ENCODE measurements at regions of chr1 and their contacts with region 1.

Region 1: GRCh38 chr1:200628223-200628881 is 7.8 kb upstream of the KIF14 start:
- DNase-seq: no peak
- H3K4me3 ChIP-seq: no peak overlapping the region
- H3K27ac ChIP-seq: no peak overlapping the region
- H3K4me1 ChIP-seq: peaks cover 15% of the 10 kb centered on the region
- H3K27me3 ChIP-seq: no peaks in the 10 kb centered on the region
- CTCF ChIP-seq: no peak

Region 2: DNA sequence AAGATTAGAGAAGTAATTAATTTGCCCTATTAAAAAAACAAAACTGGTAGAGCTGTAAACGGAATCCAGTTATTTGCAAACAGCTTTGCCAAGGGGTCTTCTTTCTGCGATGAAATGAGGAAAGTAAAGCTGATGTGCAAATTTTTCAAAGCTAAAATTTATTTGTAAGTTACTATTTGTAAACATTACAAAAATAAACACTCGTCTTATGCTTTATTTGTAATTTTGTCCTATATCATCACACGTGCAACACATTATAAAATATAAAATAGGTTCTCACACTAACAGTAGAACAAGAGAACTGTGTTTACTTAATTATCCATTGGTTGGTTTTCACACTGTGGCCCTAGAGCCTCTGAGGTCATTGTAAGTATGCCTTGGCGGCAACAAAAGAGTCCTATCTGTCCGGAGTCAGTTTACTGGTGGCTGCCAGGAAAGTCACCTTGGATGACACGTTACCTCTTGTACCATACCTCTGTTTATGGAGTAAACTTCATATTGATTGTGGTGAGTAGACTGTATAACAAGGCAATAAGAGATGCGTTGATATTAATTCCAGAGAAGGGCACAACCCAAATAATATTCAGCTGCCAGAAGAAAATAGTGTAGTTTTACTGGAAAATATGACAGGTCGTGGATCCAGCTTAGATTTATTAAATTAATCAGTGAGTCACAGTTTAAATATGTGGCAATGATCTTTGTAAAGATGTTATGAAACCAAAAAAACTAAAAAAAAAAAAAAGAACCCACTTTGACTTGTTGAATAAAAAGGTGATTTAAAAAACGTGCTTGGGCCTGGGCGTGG is 12.5 kb after region 1 on chr1:
- CTCF ChIA-PET with region 1: no interaction called
- dilution Hi-C with region 1: no loop called
- in situ Hi-C with region 1: no loop called
- intact Hi-C with region 1: no loop called
- DNase-seq: no peak
- H3K4me3 ChIP-seq: no peak overlapping the region
- H3K27ac ChIP-seq: peak overlapping the region; percentile 95
- H3K4me1 ChIP-seq: peaks cover 15% of the 10 kb centered on the region
- H3K27me3 ChIP-seq: no peaks in the 10 kb centered on the region
- CTCF ChIP-seq: no peak

Region 3: DNA sequence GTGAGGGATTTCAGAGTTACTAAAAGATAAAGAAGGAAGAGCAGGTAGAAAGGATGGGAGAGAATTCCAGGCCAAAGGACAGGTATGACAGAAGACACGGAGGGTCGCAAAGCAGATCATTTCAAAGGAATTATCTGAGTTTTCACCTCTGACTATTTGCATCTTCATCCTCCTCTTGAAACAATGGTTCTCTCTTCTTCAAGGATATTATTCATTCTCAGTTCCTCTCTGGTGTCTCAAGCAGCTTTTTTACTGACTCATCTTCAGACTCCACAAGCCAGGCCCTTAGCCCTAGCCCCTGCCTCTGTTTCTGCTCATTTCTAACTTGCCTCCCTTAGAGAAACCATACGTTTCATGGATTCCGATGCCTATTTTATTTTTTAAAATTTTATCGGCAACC is 26.3 kb after region 1 on chr1:
- CTCF ChIA-PET with region 1: no interaction called
- dilution Hi-C with region 1: no loop called
- in situ Hi-C with region 1: no loop called
- intact Hi-C with region 1: loop called (anchors 1 kb)
- DNase-seq: peak; percentile 62
- H3K4me3 ChIP-seq: no peak overlapping the region
- H3K27ac ChIP-seq: peak overlapping the region; percentile 89
- H3K4me1 ChIP-seq: peaks cover 32% of the 10 kb centered on the region
- H3K27me3 ChIP-seq: no peaks in the 10 kb centered on the region
- CTCF ChIP-seq: no peak

Region 4: GRCh38 chr1:200738740-200739498 is 110.6 kb after region 1 on chr1 and contains the start of gene CAMSAP2:
- CTCF ChIA-PET with region 1: no interaction called
- dilution Hi-C with region 1: no loop called
- in situ Hi-C with region 1: no loop called
- intact Hi-C with region 1: loop called (anchors 1 kb)
- DNase-seq: peak; percentile 85
- H3K4me3 ChIP-seq: peak within 1 kb of the TSS; percentile 90 to 94 (median 93)
- H3K27ac ChIP-seq: peak within 1 kb of the TSS; percentile 88
- H3K4me1 ChIP-seq: peaks cover 10% of the 10 kb centered on the region
- H3K27me3 ChIP-seq: no peaks in the 10 kb centered on the region
- CTCF ChIP-seq: no peak
- total RNA-seq, gene CAMSAP2: 79.7 to 118 TPM

Region 5: DNA sequence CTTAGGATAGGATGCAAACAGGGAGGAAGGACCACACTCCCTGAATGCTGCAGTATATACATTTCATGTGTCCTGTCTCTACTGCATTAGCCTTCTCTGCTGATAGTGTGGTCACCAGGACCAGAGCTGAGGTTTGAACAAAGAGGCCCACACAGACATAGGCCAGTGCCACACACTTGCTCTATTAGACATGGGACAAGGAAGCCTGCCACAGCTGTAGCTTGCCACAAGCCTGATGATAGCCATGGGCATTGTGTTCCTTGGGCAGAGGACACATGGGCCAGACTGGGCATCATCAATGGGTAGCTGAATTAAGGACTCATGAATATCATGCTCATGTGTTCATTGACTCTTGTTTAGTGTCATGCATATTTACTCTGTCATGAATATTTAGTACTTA is 120.7 kb after region 1 on chr1:
- CTCF ChIA-PET with region 1: no interaction called
- dilution Hi-C with region 1: no loop called
- in situ Hi-C with region 1: loop called in 1 of 2 experiments (anchors 5 kb)
- intact Hi-C with region 1: no loop called
- DNase-seq: no peak
- H3K4me3 ChIP-seq: no peak overlapping the region
- H3K27ac ChIP-seq: no peak overlapping the region
- H3K4me1 ChIP-seq: peaks cover under 1% of the 10 kb centered on the region
- H3K27me3 ChIP-seq: no peaks in the 10 kb centered on the region
- CTCF ChIP-seq: no peak

Region 6: DNA sequence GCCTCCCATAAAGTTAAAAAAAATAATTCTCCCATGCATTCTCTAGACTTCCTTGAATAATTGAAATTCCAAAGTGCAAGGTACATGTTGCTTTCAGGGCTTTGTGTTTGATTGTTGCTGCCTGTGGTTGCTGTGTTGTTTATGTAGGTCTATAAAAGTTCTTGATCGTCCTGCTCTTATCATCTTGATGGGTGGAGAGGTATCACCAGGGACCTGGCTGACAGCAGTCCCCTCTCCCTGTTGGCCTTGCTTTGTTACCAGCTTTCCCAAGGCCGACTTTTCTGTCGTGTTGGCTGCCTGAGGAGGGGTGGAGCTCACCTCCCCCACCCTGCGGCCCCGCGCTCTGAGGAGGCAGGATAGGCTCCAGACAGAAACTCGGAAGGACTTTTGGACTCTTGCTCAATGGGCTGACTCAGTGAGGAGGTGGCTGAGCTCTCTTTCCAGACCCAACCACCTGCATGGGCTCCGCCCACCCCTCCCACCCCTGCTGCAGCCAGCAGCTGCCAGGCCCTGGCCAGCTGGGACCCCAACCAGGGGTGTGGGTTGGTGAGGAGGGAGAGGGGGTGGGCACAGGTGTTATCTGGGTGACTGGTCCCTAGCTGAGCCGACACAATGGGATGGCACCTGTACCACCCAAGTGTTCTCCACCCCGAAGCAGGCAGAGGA is 268.3 kb after region 1 on chr1:
- CTCF ChIA-PET with region 1: interaction called, 16 read pairs
- dilution Hi-C with region 1: no loop called
- in situ Hi-C with region 1: no loop called
- intact Hi-C with region 1: no loop called
- DNase-seq: peak; percentile 90
- H3K4me3 ChIP-seq: peak overlapping the region; percentile 23 to 76 (median 48)
- H3K27ac ChIP-seq: peak overlapping the region; percentile 37
- H3K4me1 ChIP-seq: peaks cover 50% of the 10 kb centered on the region
- H3K27me3 ChIP-seq: no peaks in the 10 kb centered on the region
- CTCF ChIP-seq: no peak

Measured in mammary epithelial cell (primary cell).